ENCODE measurements at regions of chr16 and their contacts with region 1.

Region 1: DNA sequence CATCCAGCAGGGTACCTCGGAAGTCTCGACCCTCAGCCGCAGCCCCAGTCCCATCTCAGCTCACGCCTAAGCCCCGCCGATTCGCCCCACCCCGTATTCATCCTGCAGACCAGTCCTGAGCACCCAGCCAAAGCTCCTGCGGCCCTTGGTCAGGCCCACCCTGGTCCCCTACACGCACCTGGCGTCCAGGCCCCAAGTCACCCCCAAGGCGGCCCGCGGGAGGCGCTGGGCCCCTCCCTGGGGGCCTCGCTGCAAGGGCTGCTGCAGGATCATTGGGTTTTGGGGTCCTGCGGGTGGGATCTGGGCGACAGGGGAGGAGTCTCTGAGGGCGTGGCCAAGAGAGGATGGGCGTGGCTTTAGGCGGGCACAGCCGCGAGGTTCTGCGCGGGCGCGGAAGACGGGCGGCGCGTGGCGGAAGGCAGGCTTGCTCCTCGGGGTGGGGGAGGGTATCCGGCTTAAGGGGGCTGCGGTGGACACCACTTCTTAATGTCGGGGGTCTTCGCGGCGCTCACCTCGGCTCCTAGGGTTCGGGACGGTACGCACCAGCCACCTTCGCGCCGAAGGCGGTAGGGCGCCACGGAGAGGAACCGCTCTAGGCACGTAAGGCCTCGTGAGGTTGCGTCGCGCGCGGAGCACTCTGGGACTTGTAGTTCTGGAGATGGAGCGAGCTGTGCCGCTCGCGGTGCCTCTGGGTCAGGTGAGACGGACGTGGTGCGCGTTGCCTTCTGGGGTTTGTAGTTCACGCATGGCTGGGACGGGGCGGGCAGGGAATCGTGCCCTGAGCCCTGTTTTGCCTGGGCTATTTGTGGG is at the starts of genes HCFC1R1 and THOC6:
- DNase-seq: peak; percentile 98
- ATAC-seq: peak; percentile 47
- H3K4me3 Mint-ChIP-seq: peak within 1 kb of the TSS; percentile 86
- H3K27ac Mint-ChIP-seq: peak within 1 kb of the TSS; percentile 99
- H3K4me1 Mint-ChIP-seq: peaks cover 37% of the 10 kb centered on the region
- H3K27me3 Mint-ChIP-seq: peaks cover 2% of the 10 kb centered on the region; the same call in 1 of the 2 replicates
- CTCF ChIP-seq: no peak
- total RNA-seq, gene HCFC1R1: 76.0 to 84.0 TPM (median 83.2 TPM) in 3 replicates
- total RNA-seq, gene THOC6: 76.5 to 94.2 TPM (median 88.7 TPM) in 3 replicates

Region 2: DNA sequence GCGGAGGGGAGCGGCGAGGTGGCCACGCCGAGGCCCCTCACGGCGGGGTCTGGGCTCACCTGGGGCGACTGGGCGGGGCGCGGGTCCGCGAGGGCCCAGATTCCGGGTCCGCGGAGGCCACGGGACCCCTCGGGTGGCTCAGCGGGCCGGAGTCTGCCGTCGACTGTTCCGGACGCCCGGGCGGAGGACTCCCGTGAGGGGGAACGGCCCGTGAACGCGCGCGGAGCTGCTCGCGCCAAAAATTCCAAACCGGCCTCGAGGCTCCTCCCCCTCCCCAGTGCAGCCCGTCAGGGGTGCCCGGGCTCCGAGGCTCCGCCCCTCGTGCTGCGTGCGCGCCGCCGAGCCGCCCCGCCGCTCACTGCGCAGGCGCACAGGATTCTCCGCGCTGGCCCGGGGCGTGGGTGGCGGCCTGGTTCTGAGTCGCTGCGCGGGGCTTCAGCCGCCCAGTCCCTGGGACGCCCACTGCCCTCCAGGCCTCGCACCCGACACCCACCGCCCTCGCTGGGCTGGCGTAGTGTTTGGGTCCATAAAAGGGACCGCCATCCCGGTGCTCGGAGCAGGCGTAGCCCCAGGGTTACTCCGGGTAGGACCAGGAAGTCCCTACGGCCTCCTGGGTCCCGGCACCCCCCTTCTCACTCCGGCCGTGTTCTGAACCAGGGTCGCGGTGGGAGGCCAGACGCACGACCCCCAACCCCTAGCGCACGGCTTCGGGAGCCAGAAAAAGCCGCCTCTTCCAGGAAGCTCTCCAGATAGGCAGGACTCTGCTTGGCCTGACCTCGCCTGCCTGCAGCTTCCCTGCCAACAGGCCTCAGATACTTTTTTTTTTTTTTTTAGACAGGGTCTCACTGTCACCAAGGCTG is 43.4 kb before region 1 on chr16 and contains the start of gene PKMYT1:
- CTCF ChIA-PET with region 1: interaction called, 25 read pairs
- POLR2A ChIA-PET with region 1: interaction called, 4 read pairs
- DNase-seq: peak; percentile 89
- ATAC-seq: peak; percentile 72
- H3K4me3 Mint-ChIP-seq: peak within 1 kb of the TSS; percentile 79
- H3K27ac Mint-ChIP-seq: peak within 1 kb of the TSS; percentile 91
- H3K4me1 Mint-ChIP-seq: peaks cover 24% of the 10 kb centered on the region
- H3K27me3 Mint-ChIP-seq: peaks cover 6% of the 10 kb centered on the region; the same call in 1 of the 2 replicates
- CTCF ChIP-seq: no peak
- total RNA-seq, gene PKMYT1: 102 to 120 TPM (median 113 TPM) in 3 replicates

Region 3: GRCh38 chr16:3003582-3004302 is 20.1 kb before region 1 on chr16:
- CTCF ChIA-PET with region 1: interaction called, 360 read pairs
- POLR2A ChIA-PET with region 1: interaction called, 502 read pairs
- DNase-seq: peak; percentile 99
- ATAC-seq: peak; percentile 85
- H3K4me3 Mint-ChIP-seq: peak overlapping the region; percentile 42
- H3K27ac Mint-ChIP-seq: no peak overlapping the region
- H3K4me1 Mint-ChIP-seq: peaks cover 37% of the 10 kb centered on the region
- H3K27me3 Mint-ChIP-seq: no peaks in the 10 kb centered on the region
- CTCF ChIP-seq: no peak

Region 4: GRCh38 chr16:3045357-3045728 is 21.5 kb after region 1 on chr16:
- CTCF ChIA-PET with region 1: interaction called, 152 read pairs
- POLR2A ChIA-PET with region 1: interaction called, 8 read pairs
- DNase-seq: peak; percentile 60
- ATAC-seq: peak; percentile 18
- H3K4me3 Mint-ChIP-seq: peak overlapping the region; percentile 89
- H3K27ac Mint-ChIP-seq: peak overlapping the region; percentile 74
- H3K4me1 Mint-ChIP-seq: peaks cover 13% of the 10 kb centered on the region
- H3K27me3 Mint-ChIP-seq: peaks cover 26% of the 10 kb centered on the region
- CTCF ChIP-seq: no peak

Region 5: GRCh38 chr16:3099732-3100499 is 76.0 kb after region 1 on chr16:
- CTCF ChIA-PET with region 1: interaction called, 20 read pairs
- POLR2A ChIA-PET with region 1: interaction called, 14 read pairs
- DNase-seq: peak; percentile 95
- ATAC-seq: peak; percentile 42
- H3K4me3 Mint-ChIP-seq: peak overlapping the region; percentile 93
- H3K27ac Mint-ChIP-seq: peak overlapping the region; percentile 99
- H3K4me1 Mint-ChIP-seq: peaks cover 61% of the 10 kb centered on the region
- H3K27me3 Mint-ChIP-seq: no peaks in the 10 kb centered on the region; the same call in 1 of the 2 replicates
- CTCF ChIP-seq: no peak

Region 6: DNA sequence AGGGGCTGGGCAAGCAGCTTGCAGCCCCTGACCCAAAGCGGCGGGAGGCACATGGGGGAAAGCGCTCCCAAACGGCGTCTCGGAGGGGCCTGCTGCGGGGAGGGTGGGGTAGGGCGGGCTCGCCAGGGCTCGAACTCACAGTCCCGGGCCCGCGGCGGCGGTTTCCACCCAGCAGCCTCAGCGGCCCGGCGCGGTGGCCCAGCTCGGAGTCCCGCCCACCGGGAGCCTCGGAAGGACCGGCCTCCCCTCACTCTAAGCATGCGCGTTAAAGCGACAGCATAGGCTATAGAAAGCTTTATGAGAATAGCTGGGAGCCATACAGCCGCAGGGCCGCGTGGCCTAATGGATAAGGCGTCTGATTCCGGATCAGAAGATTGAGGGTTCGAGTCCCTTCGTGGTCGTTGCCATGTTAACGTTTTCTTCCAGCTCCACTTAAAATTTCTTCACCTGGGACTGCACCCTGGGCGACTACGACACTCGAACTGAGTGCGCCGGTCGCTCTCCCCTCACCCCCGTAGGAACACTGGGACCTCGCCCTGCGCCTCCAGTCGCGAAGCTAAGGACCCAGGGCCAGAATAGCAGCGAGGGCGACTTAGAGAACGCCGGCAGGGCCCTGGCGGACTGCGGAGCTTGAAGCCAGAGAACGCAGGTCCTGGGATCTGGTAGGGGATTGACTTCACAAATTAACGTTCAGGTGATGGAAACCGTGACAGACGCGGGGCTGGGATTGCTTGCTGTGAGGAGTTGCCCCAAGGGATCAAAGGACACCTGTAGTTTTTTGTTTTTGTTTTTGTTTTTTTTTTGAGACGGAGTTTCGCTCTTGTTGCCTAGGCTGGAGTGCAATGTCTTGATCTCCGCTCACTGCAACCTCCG is 126.7 kb after region 1 on chr16:
- CTCF ChIA-PET with region 1: interaction called, 12 read pairs
- POLR2A ChIA-PET with region 1: interaction called, 3 read pairs
- DNase-seq: peak; percentile 98
- ATAC-seq: peak; percentile 78
- H3K4me3 Mint-ChIP-seq: peak overlapping the region; percentile 93
- H3K27ac Mint-ChIP-seq: peak overlapping the region; percentile 96
- H3K4me1 Mint-ChIP-seq: peaks cover 7% of the 10 kb centered on the region
- H3K27me3 Mint-ChIP-seq: peaks cover 37% of the 10 kb centered on the region
- CTCF ChIP-seq: no peak